ENCODE measurements at regions of chr13 and their contacts with region 1.

Region 1: GRCh38 chr13:78603240-78603957 is at the start of gene POU4F1:
- DNase-seq: peak; percentile 59 to 71
- ATAC-seq: peak; percentile 72 to 88 (median 81)
- H3K4me3 ChIP-seq: peak within 1 kb of the TSS; percentile 66
- H3K27ac ChIP-seq: no peak within 1 kb of the TSS
- H3K4me1 ChIP-seq: peaks cover 4% of the 10 kb centered on the region
- H3K27me3 ChIP-seq: peaks cover 0 to 93% (median 54%) of the 10 kb centered on the region in 3 donors
- CTCF ChIP-seq: no peak
- total RNA-seq, gene POU4F1: 0.04 to 2.6 (median 0.50) TPM

Region 2: DNA sequence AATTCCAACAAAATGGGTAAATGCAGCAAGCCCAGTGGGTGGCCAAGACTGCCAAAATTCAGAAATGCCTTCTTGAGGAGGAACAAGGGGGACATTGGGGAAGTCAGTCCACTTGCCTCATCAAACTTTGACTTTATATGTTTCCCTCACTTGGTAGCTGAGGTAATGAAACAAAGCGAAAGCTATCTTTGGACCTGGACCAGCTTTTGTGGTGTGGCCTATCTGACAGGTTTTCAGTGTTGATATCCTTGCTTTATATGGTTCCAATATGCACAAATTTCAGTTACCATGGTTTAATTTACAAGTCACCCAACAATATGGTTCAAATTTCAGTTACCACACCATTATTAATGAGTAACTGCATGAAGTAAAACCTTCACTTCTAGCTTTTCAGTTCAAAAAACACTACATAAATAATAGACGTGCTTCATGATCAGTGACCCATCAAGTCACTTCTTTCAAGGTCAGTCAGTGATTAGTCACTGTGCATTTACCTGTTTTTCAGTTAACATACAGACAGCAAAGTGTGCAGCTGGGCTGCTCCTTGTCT is 17.6 kb after region 1 on chr13:
- intact Hi-C with region 1: loop called in 1 of 2 experiments (anchors 1 kb)
- DNase-seq: no peak
- ATAC-seq: no peak
- H3K4me3 ChIP-seq: no peak overlapping the region
- H3K27ac ChIP-seq: no peak overlapping the region
- H3K4me1 ChIP-seq: no peaks in the 10 kb centered on the region
- H3K27me3 ChIP-seq: no peaks in the 10 kb centered on the region
- CTCF ChIP-seq: no peak

Region 3: DNA sequence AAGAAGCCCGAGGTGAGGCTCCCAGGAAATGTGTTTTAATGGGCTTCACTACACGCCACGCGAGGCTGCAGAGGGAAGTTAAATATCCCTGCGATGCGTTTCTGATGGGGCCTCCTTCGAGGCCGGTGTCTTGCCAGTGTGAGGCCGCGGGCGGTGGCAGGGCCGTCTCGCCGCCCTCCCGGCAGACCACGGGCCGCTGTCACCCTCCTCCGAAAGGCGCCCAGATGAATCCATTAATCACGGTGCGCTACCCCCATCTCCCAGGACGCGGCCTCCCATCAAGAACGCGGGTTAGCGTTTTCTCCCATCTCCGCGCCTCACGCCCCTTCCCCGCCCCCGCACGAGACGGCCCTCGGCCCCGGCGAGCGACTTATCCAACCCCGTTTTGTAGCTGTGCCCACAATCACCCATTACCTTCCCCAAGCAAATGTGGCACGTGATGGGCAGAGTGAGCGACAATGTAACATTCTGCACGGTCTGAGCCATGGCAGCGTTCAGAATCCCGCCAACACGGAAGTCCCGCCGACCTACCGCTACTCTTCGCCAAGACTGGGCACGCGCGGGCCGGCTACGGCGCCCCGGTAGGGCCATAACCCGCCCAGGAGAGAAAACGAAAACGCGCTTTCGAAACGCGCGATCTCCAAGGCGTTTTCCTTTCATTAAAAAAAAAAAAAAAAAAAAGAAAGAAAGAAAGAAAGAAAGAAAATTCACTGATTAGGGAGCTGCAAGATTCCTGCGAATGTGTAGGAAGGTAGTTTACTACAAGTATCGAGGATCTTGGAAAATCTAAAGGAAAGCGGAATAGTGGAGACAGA is 55.4 kb after region 1 on chr13 and contains the start of gene OBI1:
- intact Hi-C with region 1: loop called in 1 of 2 experiments (anchors 10 kb)
- DNase-seq: peak; percentile 93 to 95
- ATAC-seq: peak; percentile 97 to 99 (median 99)
- H3K4me3 ChIP-seq: peak within 1 kb of the TSS; percentile 79
- H3K27ac ChIP-seq: peak within 1 kb of the TSS; percentile 34
- H3K4me1 ChIP-seq: peaks cover 19% of the 10 kb centered on the region
- H3K27me3 ChIP-seq: no peaks in the 10 kb centered on the region
- CTCF ChIP-seq: no peak
- total RNA-seq, gene OBI1: 4.3 to 5.7 (median 5.2) TPM